ENCODE measurements at regions of chr22 and their contacts with region 1.

Region 1: GRCh38 chr22:33519071-33519973 is 401.0 kb downstream of the LARGE1 start:
- DNase-seq: peak; percentile 57
- H3K4me3 ChIP-seq: no peak overlapping the region
- H3K27ac ChIP-seq: no peak overlapping the region
- H3K4me1 ChIP-seq: no peaks in the 10 kb centered on the region
- H3K27me3 ChIP-seq: no peaks in the 10 kb centered on the region
- CTCF ChIP-seq: peak; percentile 46

Region 2: DNA sequence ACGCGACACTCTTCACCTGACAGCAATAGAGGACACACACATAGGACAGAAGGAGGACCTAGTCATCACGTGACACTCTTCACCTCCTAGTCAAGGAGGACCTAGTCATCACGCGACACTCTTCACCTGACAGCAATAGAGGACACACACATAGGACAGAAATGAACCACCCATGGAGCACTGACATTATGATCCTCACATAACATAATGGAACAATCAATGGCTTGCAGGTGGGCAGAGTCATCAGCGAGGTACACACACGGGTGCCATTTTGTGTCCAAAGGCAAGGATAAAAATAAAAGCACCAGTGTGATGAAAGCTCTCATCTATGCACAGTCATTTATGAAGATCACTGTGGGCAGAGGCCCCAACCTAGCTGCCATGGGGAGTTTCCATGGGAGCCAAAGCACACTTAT is 46.3 kb after region 1 on chr22:
- intact Hi-C with region 1: no loop called
- DNase-seq: no peak
- H3K4me3 ChIP-seq: no peak overlapping the region
- H3K27ac ChIP-seq: no peak overlapping the region
- H3K4me1 ChIP-seq: no peaks in the 10 kb centered on the region
- H3K27me3 ChIP-seq: no peaks in the 10 kb centered on the region
- CTCF ChIP-seq: no peak

Region 3: GRCh38 chr22:33579448-33580093 is 60.2 kb after region 1 on chr22:
- intact Hi-C with region 1: loop called (anchors 2 kb)
- DNase-seq: peak; percentile 81
- H3K4me3 ChIP-seq: no peak overlapping the region
- H3K27ac ChIP-seq: no peak overlapping the region
- H3K4me1 ChIP-seq: peaks cover 11% of the 10 kb centered on the region
- H3K27me3 ChIP-seq: no peaks in the 10 kb centered on the region
- CTCF ChIP-seq: peak; percentile 72

Measured in colonic mucosa (tissue), 4 donors.